Left lung (tissue), 14 donors: ENCODE measurements at regions of chr1 and their contacts with region 1.

Region 1: GRCh38 chr1:6401673-6402072 is 8.1 kb upstream of the ACOT7 start:
- DNase-seq: no peak
- ATAC-seq: peak; percentile 52
- H3K4me3 ChIP-seq: no peak overlapping the region
- H3K27ac ChIP-seq: no peak overlapping the region
- H3K4me1 ChIP-seq: no peaks in the 10 kb centered on the region
- H3K27me3 ChIP-seq: peaks cover 2 to 39% of the 10 kb centered on the region in 2 donors
- CTCF ChIP-seq: no peak

Region 2: DNA sequence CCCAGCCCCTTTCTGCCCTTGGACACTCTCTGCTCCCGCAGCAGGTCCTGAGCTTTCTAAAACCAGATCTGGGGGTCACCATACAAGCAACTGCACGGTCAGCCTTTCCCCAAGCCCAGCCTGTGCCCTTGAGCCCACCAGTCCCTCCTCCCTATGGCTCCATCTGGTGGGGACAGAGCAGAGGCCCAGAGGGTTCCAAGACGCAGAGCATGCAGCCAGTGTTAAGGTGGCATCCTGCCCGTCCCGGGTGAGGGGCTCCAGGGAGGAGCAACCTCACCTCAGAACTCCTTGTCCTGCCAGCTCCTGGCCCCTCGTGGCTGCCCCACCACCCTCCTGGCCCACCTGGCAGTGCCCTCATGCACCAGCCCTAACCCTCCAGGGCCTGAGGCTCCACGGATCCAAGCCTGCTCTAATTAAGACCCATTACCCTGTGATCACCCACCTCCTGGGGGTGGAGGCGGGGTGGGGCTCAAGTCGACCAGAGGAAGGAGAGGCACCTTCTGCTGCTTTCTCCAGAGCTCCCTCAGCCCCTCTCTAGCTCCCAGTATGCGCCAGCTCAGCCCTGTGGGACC is 230.0 kb before region 1 on chr1:
- intact Hi-C with region 1: no loop called
- DNase-seq: no peak
- ATAC-seq: peak; percentile 32
- H3K4me3 ChIP-seq: no peak overlapping the region
- H3K27ac ChIP-seq: no peak overlapping the region
- H3K4me1 ChIP-seq: peaks cover 0 to 10% of the 10 kb centered on the region in 2 donors
- H3K27me3 ChIP-seq: peaks cover 0 to 63% of the 10 kb centered on the region in 2 donors
- CTCF ChIP-seq: no peak

Region 3: GRCh38 chr1:6359216-6360116 is 42.2 kb before region 1 on chr1:
- intact Hi-C with region 1: loop called in 1 of 2 experiments (anchors 5 kb)
- DNase-seq: peak in 3 of 4 donors; percentile 59 to 86 (median 80)
- ATAC-seq: peak; percentile 94
- H3K4me3 ChIP-seq: no peak overlapping the region
- H3K27ac ChIP-seq: peak overlapping the region; percentile 81 to 84
- H3K4me1 ChIP-seq: peaks cover 13 to 31% of the 10 kb centered on the region in 2 donors
- H3K27me3 ChIP-seq: no peaks in the 10 kb centered on the region
- CTCF ChIP-seq: no peak

Region 4: DNA sequence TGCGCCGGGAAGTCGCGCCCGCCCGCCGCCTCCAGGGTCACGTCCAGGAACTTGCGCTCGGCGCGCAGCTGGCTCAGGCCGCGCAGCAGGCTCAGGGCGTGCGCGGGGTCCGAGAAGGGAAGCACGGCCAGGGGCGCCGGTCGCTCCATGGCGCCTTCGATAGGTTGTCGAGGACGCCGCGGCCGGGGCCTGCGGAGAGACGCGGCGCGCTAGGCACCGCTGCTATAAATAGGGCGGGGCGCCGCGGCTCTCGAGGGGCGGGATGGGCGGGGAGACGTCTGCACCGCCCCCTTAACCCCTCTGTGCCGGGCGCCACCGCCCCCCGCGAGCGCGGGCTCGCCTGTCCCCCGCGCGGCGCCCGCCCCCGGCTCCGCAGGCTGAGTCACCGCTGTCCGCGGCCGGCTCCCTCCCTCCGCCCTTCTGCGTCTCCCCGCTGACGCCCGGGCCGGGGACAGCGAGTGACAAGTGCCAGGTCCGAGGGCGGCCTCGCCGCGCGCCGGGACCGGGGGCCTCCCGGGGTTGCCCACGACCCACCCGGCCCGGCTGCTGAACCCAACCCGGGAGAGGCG is 201.1 kb after region 1 on chr1 and contains the start of gene KLHL21:
- intact Hi-C with region 1: no loop called
- DNase-seq: peak; percentile 83 to 98 (median 92)
- ATAC-seq: peak; percentile 80
- H3K4me3 ChIP-seq: peak within 1 kb of the TSS; percentile 52 to 92
- H3K27ac ChIP-seq: peak within 1 kb of the TSS; percentile 99
- H3K4me1 ChIP-seq: peaks cover 23 to 54% of the 10 kb centered on the region in 2 donors
- H3K27me3 ChIP-seq: no peaks in the 10 kb centered on the region
- CTCF ChIP-seq: no peak
- polyA plus RNA-seq, gene KLHL21: 11.0 to 15.9 (median 13.6) TPM